ENCODE measurements at regions of chr16 and their contacts with region 1.

Region 1: GRCh38 chr16:55465077-55465896 is 13.7 kb upstream of the MMP2 start:
- DNase-seq: peak; percentile 74 to 82
- ATAC-seq: peak; percentile 86 to 96
- H3K4me3 ChIP-seq: no peak overlapping the region
- H3K27ac ChIP-seq: no peak overlapping the region
- H3K4me1 ChIP-seq: peaks cover under 1% of the 10 kb centered on the region; the same call in 1 of the 3 replicates
- CTCF ChIP-seq: peak; percentile 100
- EP300 ChIP-seq: no peak
- POLR2A ChIP-seq: no peak
- RAD21 ChIP-seq: peak; percentile 100

Region 2: DNA sequence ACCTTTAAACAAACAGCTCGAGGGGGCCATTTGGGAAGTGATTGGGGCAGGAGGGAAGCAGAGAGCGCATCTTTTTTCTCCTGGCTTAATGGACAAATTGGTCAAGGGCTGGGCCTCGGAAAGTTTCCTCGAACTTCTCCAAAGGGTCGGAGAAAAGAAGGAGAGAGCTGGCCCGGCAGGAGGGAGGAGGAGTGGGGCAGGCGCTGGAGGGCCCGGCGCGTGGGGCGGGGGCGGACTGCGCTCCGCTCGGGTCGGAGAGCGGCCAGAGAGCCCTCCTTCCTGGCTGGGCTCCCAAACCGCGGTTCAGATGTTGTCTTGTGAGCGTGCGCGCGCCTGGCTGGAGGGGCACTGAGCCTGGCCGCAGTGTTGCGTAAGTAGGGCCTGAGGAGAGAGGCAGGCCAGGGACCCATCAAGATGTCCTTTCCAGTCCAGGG is 15.0 kb after region 1 on chr16:
- CTCF ChIA-PET with region 1: interaction called, 55 read pairs
- POLR2A ChIA-PET with region 1: no interaction called
- DNase-seq: no peak
- ATAC-seq: no peak
- H3K4me3 ChIP-seq: peak overlapping the region; percentile 60; the same call in 1 of the 3 replicates
- H3K27ac ChIP-seq: no peak overlapping the region
- H3K4me1 ChIP-seq: 0 out of 3 replicates have a peak, but pooled peaks cover 3% of the 10 kb centered on the region
- CTCF ChIP-seq: no peak
- EP300 ChIP-seq: no peak
- POLR2A ChIP-seq: no peak
- RAD21 ChIP-seq: no peak

Region 3: DNA sequence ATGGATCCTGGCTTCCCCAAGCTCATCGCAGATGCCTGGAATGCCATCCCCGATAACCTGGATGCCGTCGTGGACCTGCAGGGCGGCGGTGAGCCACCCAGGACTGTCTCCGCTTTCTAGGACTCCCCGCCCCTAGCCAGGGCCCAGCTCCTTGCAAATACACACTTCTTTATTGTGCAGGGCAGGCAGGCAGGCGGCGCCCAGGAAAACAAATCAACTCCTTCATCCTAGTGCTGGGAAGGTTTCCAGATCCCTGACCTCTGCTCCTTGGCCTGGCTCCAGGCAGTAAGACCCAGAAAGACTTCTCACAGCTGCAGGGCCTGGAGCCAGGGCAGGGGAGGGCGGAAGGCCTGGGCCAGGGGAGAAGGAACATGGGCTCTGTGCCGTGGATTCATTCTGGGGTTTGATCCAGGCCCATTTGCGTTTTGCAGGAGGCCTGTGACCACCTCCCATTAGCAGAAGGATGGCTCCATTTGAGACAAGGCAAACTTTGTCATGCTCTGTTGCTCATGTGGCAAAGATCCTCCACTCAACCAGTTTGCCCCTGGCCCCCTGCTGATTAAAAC is 37.6 kb after region 1 on chr16:
- CTCF ChIA-PET with region 1: interaction called, 54 read pairs
- POLR2A ChIA-PET with region 1: no interaction called
- DNase-seq: peak in 1 of 2 experiments; percentile 68
- ATAC-seq: peak; percentile 44 to 89; a peak in 5 of 6 replicates
- H3K4me3 ChIP-seq: no peak overlapping the region
- H3K27ac ChIP-seq: peak overlapping the region in 1 of 2 experiments; percentile 64; a peak in 4 of 6 replicates
- H3K4me1 ChIP-seq: peaks cover 13% of the 10 kb centered on the region
- CTCF ChIP-seq: no peak
- EP300 ChIP-seq: no peak
- POLR2A ChIP-seq: no peak
- RAD21 ChIP-seq: no peak

Region 4: DNA sequence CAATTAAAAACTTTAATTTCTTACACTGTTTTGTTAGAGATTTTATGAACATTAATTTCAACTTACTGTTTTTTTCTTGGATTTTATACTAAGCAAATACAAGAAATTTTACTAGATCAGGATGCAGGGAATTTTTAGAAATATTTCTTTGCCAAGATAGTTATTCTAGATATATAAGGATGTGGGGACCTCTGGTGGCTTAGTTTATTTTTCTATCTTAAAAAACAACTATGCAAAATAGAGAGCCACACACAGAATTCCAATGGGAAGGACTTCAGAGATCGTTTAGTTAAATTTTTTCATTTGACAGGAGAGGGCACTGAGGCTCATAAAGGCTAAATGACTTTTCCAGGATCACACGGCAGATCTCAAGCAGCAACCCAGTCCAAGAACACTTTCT is 78.2 kb after region 1 on chr16:
- CTCF ChIA-PET with region 1: interaction called, 147 read pairs
- POLR2A ChIA-PET with region 1: no interaction called
- DNase-seq: peak in 1 of 2 experiments; percentile 31
- ATAC-seq: peak in 1 of 2 experiments; percentile 51; a peak in 3 of 6 replicates
- H3K4me3 ChIP-seq: no peak overlapping the region
- H3K27ac ChIP-seq: no peak overlapping the region
- H3K4me1 ChIP-seq: no peaks in the 10 kb centered on the region
- CTCF ChIP-seq: peak; percentile 61
- EP300 ChIP-seq: no peak
- POLR2A ChIP-seq: no peak
- RAD21 ChIP-seq: peak; percentile 66 to 79

Region 5: GRCh38 chr16:55572439-55572838 is 107.2 kb after region 1 on chr16:
- CTCF ChIA-PET with region 1: interaction called, 24 read pairs
- POLR2A ChIA-PET with region 1: no interaction called
- DNase-seq: peak in 1 of 2 experiments; percentile 46
- ATAC-seq: peak in 1 of 2 experiments; percentile 24; a peak in 1 of 6 replicates
- H3K4me3 ChIP-seq: no peak overlapping the region
- H3K27ac ChIP-seq: no peak overlapping the region
- H3K4me1 ChIP-seq: no peaks in the 10 kb centered on the region
- CTCF ChIP-seq: no peak
- EP300 ChIP-seq: no peak
- POLR2A ChIP-seq: no peak
- RAD21 ChIP-seq: no peak

Region 6: DNA sequence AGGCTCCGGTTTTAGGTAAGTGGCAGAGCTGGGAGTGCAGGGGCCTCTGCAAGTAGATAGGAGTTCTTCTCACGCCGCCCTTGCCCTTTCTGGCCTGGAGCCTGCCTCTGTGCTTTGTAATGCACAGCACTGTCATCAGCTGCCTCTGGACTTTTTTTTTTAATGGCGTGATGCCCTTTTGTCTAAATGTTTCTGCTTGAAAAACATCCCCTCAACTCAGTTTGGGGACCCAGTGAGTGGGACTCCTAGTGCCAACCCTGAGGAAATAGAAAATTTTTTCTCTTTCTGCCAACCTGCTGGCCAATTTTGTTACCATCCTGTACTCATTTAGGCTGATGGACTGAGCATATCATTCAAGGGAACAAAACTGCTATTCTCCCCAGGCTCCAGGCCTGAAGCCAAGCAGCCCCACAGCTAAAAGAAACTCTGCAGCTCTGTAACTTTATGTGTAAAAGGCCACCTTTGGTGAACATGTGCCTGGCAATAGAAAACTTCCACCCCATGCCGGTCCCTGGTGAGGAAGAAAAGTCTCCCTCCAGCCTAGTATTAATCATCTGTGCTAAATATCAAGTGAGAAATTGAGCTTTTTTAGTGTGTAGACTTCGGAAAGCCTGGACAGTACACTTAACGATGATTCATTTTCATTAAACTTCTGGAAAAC is 213.0 kb after region 1 on chr16:
- CTCF ChIA-PET with region 1: interaction called, 11 read pairs
- POLR2A ChIA-PET with region 1: no interaction called
- DNase-seq: no peak
- ATAC-seq: no peak
- H3K4me3 ChIP-seq: no peak overlapping the region
- H3K27ac ChIP-seq: no peak overlapping the region
- H3K4me1 ChIP-seq: no peaks in the 10 kb centered on the region
- CTCF ChIP-seq: no peak
- EP300 ChIP-seq: no peak
- POLR2A ChIP-seq: no peak
- RAD21 ChIP-seq: no peak

Measured in A549 (cell line).